K562 (cell line): ENCODE measurements at regions of chr2 and their contacts with region 1.

Region 1: DNA sequence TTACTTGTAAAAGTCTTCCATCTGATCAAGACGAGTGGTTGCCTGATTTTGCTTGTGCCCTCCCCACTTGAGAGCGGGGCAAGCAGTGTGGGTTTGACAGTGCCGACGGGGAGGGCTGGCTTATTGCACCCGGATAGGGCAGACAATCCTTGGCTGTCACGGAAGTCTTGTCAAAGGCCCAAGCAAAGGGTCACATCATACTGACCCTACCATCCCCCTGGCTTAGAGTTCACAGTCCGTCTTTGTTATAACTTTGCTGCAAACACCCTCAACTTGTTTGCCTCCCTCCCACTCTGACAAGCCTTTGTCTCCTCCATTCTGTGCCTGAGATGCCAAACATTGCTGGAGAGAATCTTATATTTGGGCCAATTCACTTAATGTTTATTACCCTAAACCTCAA is 165.9 kb upstream of the MSH6 start:
- DNase-seq: no peak
- ATAC-seq: no peak
- H3K4me3 ChIP-seq: no peak overlapping the region
- H3K27ac ChIP-seq: no peak overlapping the region
- H3K4me1 ChIP-seq: no peaks in the 10 kb centered on the region
- H3K27me3 ChIP-seq: peaks cover 11 to 42% of the 10 kb centered on the region in 2 experiments
- CTCF ChIP-seq: no peak
- EP300 ChIP-seq: no peak
- POLR2A ChIP-seq: no peak
- RAD21 ChIP-seq: no peak

Region 2: DNA sequence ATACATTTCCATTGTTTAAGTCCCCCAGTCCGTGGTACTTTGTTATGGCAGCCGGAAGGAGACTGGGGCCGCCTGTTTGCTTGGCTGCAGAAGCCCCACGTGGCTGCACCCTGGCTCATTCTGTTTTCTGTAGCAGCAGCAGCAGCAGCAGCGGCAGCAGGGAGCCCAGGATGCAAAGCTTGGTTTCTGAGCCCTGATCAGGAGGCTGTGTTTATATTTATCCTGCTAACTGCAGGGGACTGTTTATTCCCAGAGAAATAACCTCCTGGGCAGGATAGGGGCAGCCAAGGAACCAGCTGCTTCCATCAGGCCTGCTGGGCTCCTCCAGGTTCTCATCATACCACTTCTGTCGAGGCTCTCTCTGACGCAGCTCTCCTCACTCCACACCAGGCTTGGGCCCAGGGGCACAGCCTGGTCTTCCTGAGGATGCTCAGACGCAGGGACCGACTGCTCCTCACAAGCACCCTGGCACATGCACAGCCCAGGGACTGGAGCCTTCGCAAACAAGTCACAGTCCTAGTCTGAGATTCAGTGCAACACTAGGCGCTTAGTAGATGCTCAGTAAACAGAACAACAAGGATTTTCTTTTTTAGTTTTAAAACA is 75.1 kb before region 1 on chr2:
- CTCF ChIA-PET with region 1: no interaction called
- POLR2A ChIA-PET with region 1: no interaction called
- in situ Hi-C with region 1: loop called (anchors 5 kb)
- intact Hi-C with region 1: no loop called
- DNase-seq: no peak
- ATAC-seq: no peak
- H3K4me3 ChIP-seq: no peak overlapping the region
- H3K27ac ChIP-seq: no peak overlapping the region
- H3K4me1 ChIP-seq: no peaks in the 10 kb centered on the region; a peak in 1 of 5 replicates
- H3K27me3 ChIP-seq: peaks cover 6 to 35% of the 10 kb centered on the region in 2 experiments; a peak in 3 of 5 replicates
- CTCF ChIP-seq: no peak
- EP300 ChIP-seq: no peak
- POLR2A ChIP-seq: no peak
- RAD21 ChIP-seq: no peak